ENCODE measurements at regions of chr17 and their contacts with region 1.

Region 1: GRCh38 chr17:44389723-44390202 is 314 bp upstream of the ITGA2B start:
- DNase-seq: no peak
- H3K4me3 ChIP-seq: no peak overlapping the region
- CTCF ChIP-seq: no peak

Region 2: DNA sequence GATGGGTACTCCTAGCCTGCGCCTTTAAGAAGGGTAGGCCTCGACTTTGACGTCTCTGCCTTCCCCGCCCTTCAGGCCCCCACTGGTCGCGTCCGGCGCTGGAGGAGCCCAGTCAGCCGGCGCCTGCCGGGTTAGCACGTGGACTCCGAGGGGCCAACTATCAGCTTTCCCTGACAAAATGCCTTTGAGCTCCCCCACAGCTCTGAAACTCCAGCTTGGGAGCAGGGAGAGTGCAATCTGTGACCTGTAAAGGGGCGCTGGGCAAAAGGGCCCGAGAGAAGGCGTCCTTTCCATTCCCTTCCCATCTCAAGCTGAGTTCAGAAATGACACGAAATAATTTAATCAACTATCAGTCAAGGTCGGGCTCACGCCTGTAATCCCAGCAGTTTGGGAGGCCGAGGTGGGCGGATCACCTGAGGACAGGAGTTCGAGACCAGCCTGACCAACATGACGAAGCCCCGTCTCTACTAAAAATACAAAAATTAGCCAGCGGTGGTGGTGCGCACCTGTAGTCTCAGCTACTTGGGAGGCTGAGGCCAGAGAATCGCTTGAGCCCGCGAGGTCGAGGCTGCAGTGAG is 62.8 kb before region 1 on chr17:
- in situ Hi-C with region 1: no loop called
- DNase-seq: peak; percentile 92
- H3K4me3 ChIP-seq: no peak overlapping the region
- CTCF ChIP-seq: no peak

Region 3: GRCh38 chr17:44438636-44439035 is 48.9 kb after region 1 on chr17:
- in situ Hi-C with region 1: loop called (anchors 5 kb)
- DNase-seq: no peak
- H3K4me3 ChIP-seq: no peak overlapping the region
- CTCF ChIP-seq: no peak

Region 4: DNA sequence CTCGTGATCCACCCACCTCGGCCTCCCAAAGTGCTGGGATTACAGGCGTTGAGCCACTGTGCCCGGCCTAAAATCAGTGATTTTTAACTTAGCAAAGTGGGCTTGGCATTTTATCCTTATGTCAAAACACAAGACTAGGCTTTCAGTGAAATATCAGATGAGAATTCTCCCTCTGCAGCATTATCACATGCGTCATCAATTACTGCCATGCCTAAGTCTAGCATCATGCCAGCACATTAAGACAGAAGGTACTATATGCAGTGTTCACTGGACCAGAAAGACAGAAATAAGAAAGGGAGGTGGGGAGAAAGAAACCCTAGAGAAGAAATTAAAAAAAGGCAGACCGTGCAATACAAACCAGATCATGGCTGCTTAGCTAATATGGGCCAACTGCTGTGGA is 83.6 kb after region 1 on chr17:
- in situ Hi-C with region 1: loop called (anchors 5 kb)
- DNase-seq: no peak
- H3K4me3 ChIP-seq: no peak overlapping the region
- CTCF ChIP-seq: no peak